Caco-2 (cell line): ENCODE measurements at regions of chr5 and their contacts with region 1.

Region 1: GRCh38 chr5:83058726-83059125 is 18.5 kb downstream of the TMEM167A start:
- DNase-seq: no peak
- H3K4me3 ChIP-seq: no peak overlapping the region
- H3K4me3 Mint-ChIP-seq: no peak overlapping the region
- H3K27ac Mint-ChIP-seq: no peak overlapping the region
- H3K4me1 ChIP-seq: no peaks in the 10 kb centered on the region
- H3K4me1 Mint-ChIP-seq: no peaks in the 10 kb centered on the region
- H3K27me3 ChIP-seq: no peaks in the 10 kb centered on the region
- H3K27me3 Mint-ChIP-seq: no peaks in the 10 kb centered on the region
- CTCF ChIP-seq: no peak

Region 2: GRCh38 chr5:83026930-83027687 is 31.6 kb before region 1 on chr5:
- CTCF ChIA-PET with region 1: interaction called, 10 read pairs
- POLR2A ChIA-PET with region 1: no interaction called
- intact Hi-C with region 1: no loop called
- DNase-seq: no peak
- H3K4me3 ChIP-seq: no peak overlapping the region
- H3K4me3 Mint-ChIP-seq: no peak overlapping the region
- H3K27ac Mint-ChIP-seq: no peak overlapping the region
- H3K4me1 ChIP-seq: no peaks in the 10 kb centered on the region
- H3K4me1 Mint-ChIP-seq: no peaks in the 10 kb centered on the region
- H3K27me3 ChIP-seq: no peaks in the 10 kb centered on the region
- H3K27me3 Mint-ChIP-seq: no peaks in the 10 kb centered on the region
- CTCF ChIP-seq: no peak

Region 3: GRCh38 chr5:83085106-83085505 is 26.4 kb after region 1 on chr5:
- CTCF ChIA-PET with region 1: no interaction called
- POLR2A ChIA-PET with region 1: no interaction called
- intact Hi-C with region 1: no loop called
- DNase-seq: no peak
- H3K4me3 ChIP-seq: no peak overlapping the region
- H3K4me3 Mint-ChIP-seq: no peak overlapping the region
- H3K27ac Mint-ChIP-seq: no peak overlapping the region
- H3K4me1 ChIP-seq: no peaks in the 10 kb centered on the region
- H3K4me1 Mint-ChIP-seq: no peaks in the 10 kb centered on the region
- H3K27me3 ChIP-seq: no peaks in the 10 kb centered on the region
- H3K27me3 Mint-ChIP-seq: no peaks in the 10 kb centered on the region
- CTCF ChIP-seq: no peak

Region 4: GRCh38 chr5:83827111-83827541 is 768.4 kb after region 1 on chr5:
- CTCF ChIA-PET with region 1: no interaction called
- POLR2A ChIA-PET with region 1: no interaction called
- intact Hi-C with region 1: no loop called
- DNase-seq: no peak
- H3K4me3 ChIP-seq: no peak overlapping the region
- H3K4me3 Mint-ChIP-seq: no peak overlapping the region
- H3K27ac Mint-ChIP-seq: no peak overlapping the region
- H3K4me1 ChIP-seq: no peaks in the 10 kb centered on the region
- H3K4me1 Mint-ChIP-seq: no peaks in the 10 kb centered on the region
- H3K27me3 ChIP-seq: no peaks in the 10 kb centered on the region
- H3K27me3 Mint-ChIP-seq: no peaks in the 10 kb centered on the region
- CTCF ChIP-seq: no peak